Thyroid gland (tissue), 4 donors: ENCODE measurements at regions of chr1 and their contacts with region 1.

Region 1: DNA sequence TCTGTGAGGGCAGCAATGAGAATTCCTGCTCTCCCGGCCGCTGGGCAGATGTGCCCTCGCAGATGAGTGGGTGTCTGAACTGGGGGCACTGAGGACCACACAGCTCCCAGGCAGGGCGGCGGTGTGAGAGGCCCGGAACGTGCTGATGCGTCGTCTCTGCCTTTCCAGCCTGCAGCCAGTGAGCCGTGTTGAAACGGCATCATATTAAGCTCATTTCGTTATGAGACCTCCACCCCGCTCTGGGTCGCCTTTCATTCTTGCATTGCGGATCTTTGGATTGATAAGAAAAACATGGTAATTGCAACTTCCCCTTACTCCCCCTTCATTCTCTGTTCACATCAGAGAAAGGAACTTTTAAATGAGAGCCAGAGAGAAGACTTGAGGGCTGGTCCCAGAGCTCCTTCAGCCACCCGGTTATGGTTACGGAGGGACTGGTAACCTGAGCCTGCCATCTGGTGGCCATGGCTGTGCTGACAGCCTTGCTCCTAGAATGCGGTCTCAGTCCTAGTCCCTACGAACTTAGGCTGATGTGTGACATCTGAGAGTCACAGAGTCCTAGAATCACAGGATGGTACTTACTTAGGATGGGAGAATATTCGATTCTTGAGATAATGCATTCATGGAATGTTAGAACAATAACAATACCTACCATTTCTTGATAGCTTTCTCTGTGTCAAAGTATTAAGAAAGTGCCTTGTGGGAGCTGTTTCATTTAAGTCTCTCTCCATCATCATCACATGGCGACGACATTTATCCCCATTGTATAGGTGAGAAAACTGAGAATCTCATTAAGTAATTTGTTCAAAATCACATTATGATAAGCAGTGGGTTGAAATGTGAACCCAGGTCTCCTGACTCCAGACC is 271.0 kb downstream of the TRABD2B start:
- DNase-seq: peak; percentile 78
- H3K4me3 ChIP-seq: no peak overlapping the region
- H3K27ac ChIP-seq: no peak overlapping the region
- H3K4me1 ChIP-seq: peaks cover 5 to 7% of the 10 kb centered on the region in 2 donors
- H3K27me3 ChIP-seq: peaks cover 8% of the 10 kb centered on the region
- CTCF ChIP-seq: peak; percentile 70 to 89 (median 78)
- POLR2A ChIP-seq: no peak

Region 2: DNA sequence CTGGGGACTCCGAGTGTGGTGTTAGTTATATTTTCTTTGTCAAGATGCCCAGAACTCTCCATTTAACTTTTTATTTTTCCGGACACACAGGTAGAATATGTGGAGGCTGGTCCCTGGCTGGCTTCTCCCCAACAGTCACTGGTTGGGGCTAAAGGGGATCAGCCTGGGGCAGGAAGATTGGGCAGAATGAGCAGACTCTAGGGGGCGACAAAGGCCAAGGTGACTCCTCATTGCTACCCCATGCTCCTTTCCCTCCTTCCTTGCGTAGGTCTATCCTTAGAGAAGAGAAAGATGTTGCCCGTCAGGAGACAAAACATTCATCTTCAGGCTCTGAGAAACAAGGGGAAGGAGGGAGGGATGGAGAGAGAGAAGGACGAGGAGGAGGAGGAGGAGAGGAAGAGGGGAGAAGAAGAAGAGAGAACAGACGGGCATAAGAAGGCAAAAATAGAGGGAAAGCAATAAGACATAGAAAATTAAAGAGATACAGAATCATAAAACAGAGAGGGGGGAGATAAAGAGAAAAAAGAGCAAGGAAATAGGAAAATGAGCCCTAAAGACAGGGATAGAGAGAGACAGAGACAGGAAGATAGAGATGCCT is 198.5 kb before region 1 on chr1:
- intact Hi-C with region 1: loop called (anchors 10 kb)
- DNase-seq: no peak
- H3K4me3 ChIP-seq: no peak overlapping the region
- H3K27ac ChIP-seq: no peak overlapping the region
- H3K4me1 ChIP-seq: no peaks in the 10 kb centered on the region
- H3K27me3 ChIP-seq: no peaks in the 10 kb centered on the region
- CTCF ChIP-seq: peak in 4 of 6 experiments; percentile 20 to 33 (median 24)
- POLR2A ChIP-seq: no peak

Region 3: GRCh38 chr1:47771751-47772180 is 45.5 kb after region 1 on chr1:
- intact Hi-C with region 1: no loop called
- DNase-seq: peak in 1 of 2 donors; percentile 10
- H3K4me3 ChIP-seq: no peak overlapping the region
- H3K27ac ChIP-seq: no peak overlapping the region
- H3K4me1 ChIP-seq: no peaks in the 10 kb centered on the region
- H3K27me3 ChIP-seq: no peaks in the 10 kb centered on the region
- CTCF ChIP-seq: no peak
- POLR2A ChIP-seq: no peak

Region 4: DNA sequence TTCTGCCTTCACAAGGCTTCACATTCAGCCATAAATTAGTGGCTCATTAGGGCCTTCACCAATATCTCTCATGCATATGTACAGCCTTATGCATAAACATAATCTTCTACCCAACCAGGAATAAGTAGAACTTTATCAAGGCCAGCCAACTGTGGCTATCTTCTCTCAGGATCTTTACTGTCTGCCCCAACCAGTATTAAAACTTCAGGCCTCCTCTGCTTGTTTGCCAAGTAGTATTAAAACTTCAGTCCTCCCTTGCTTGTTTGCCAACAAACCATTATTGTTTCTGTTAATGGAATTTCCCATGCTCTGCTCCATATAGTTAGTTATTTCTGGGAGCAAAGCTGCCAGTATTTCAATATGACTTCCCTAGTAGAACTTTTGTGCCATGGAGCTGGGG is 576.4 kb after region 1 on chr1:
- intact Hi-C with region 1: no loop called
- DNase-seq: no peak
- H3K4me3 ChIP-seq: no peak overlapping the region
- H3K27ac ChIP-seq: no peak overlapping the region
- H3K4me1 ChIP-seq: no peaks in the 10 kb centered on the region
- H3K27me3 ChIP-seq: no peaks in the 10 kb centered on the region
- CTCF ChIP-seq: no peak
- POLR2A ChIP-seq: no peak